Stomach (tissue), 19 donors: ENCODE measurements at regions of chr20 and their contacts with region 1.

Region 1: GRCh38 chr20:57346477-57346876 is 4.6 kb upstream of the RAE1 start:
- DNase-seq: peak; percentile 79 to 88
- H3K4me3 ChIP-seq: no peak overlapping the region
- H3K27ac ChIP-seq: no peak overlapping the region
- H3K4me1 ChIP-seq: peaks cover 0 to 4% (median 2%) of the 10 kb centered on the region in 4 donors
- H3K27me3 ChIP-seq: peaks cover 0 to 30% (median 0%) of the 10 kb centered on the region in 3 donors
- CTCF ChIP-seq: peak in 5 of 7 experiments; percentile 36 to 75 (median 66)
- EP300 ChIP-seq: no peak
- POLR2A ChIP-seq: no peak

Region 2: DNA sequence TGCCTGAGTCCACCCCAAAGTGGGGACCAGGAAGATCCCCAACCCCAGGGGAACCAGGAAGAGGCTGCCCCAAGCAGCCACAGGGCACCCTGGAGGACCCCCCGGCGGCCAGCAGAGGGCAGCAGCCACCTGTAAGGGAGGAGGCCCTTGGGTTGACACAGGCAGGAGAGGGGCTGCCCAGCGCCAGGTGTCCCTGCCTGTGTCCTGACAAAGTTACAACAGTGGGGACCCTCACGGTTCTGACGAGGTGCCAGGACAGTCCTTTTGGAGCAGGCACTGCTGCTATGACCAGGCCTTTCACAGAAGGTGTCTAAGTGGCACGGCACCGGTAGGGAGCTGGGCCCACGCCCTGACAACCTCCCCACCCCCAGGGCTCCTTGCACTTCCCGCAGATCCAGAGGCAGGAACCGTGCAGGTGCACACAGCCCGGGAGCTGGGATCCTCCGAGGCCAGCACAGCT is 256.8 kb before region 1 on chr20:
- intact Hi-C with region 1: loop called (anchors 5 kb)
- DNase-seq: peak; percentile 78 to 87
- H3K4me3 ChIP-seq: no peak overlapping the region
- H3K27ac ChIP-seq: no peak overlapping the region
- H3K4me1 ChIP-seq: peaks cover 0 to 13% (median 5%) of the 10 kb centered on the region in 4 donors
- H3K27me3 ChIP-seq: peaks cover 0 to 79% (median 3%) of the 10 kb centered on the region in 3 donors
- CTCF ChIP-seq: peak in 5 of 7 experiments; percentile 79 to 92 (median 82)
- EP300 ChIP-seq: no peak
- POLR2A ChIP-seq: no peak